ENCODE measurements at regions of chr1 and their contacts with region 1.

Region 1: DNA sequence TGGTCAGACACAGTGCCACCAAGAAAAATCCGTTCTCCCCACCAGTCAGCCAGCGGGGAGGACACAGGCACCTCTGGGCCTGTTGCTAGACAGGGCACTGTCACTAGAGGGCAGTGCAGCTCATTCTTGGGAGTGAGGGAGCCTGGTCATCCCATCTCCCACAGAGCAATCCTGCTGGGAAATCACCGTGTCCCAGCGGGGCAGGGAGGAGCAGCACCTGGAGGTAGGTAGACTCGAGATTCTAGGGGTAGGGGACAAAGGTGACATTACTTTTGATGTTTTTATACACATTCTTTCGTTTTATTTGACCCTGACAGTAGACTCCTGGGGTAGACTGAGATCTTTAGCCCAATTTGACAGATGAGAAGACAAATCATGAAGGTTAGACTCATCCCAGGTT is 6.7 kb upstream of the CAMK1G start:
- DNase-seq: peak; percentile 65
- H3K4me3 ChIP-seq: no peak overlapping the region
- H3K27ac ChIP-seq: no peak overlapping the region
- H3K27me3 ChIP-seq: peaks cover 4% of the 10 kb centered on the region
- CTCF ChIP-seq: peak; percentile 97

Region 2: GRCh38 chr1:209692745-209693504 is 116.1 kb after region 1 on chr1:
- in situ Hi-C with region 1: loop called (anchors 25 kb)
- DNase-seq: peak; percentile 55
- H3K4me3 ChIP-seq: no peak overlapping the region
- H3K27ac ChIP-seq: no peak overlapping the region
- H3K27me3 ChIP-seq: no peaks in the 10 kb centered on the region
- CTCF ChIP-seq: peak; percentile 85

Measured in brain microvascular endothelial cell (primary cell).